A673 (cell line): ENCODE measurements at regions of chr4 and their contacts with region 1.

Region 1: DNA sequence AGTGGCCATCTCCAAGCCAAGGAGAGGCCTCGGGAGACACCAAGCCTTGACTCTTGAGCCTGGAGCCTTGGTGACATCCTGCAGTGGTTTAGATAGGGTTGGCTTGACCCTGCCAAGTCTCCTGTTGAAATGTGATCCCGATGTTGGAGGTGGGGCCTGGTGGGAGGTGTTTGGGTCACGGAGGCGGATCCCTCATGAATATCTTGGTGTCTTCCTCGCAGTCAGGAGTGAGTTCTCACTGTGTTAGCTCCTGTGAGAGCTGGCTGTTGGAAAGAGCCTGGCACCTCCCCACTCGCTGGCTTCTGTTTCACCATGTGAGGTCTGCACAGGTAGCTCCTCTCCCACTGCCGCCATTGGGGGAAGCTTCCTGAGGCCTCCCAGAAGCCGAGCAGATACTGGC is 38.8 kb downstream of the ADRA2C start:
- DNase-seq: no peak
- H3K4me3 ChIP-seq: no peak overlapping the region
- H3K27ac ChIP-seq: peak overlapping the region; percentile 76
- H3K4me1 ChIP-seq: peaks cover 22% of the 10 kb centered on the region
- H3K27me3 ChIP-seq: peaks cover 7% of the 10 kb centered on the region
- CTCF ChIP-seq: no peak

Region 2: DNA sequence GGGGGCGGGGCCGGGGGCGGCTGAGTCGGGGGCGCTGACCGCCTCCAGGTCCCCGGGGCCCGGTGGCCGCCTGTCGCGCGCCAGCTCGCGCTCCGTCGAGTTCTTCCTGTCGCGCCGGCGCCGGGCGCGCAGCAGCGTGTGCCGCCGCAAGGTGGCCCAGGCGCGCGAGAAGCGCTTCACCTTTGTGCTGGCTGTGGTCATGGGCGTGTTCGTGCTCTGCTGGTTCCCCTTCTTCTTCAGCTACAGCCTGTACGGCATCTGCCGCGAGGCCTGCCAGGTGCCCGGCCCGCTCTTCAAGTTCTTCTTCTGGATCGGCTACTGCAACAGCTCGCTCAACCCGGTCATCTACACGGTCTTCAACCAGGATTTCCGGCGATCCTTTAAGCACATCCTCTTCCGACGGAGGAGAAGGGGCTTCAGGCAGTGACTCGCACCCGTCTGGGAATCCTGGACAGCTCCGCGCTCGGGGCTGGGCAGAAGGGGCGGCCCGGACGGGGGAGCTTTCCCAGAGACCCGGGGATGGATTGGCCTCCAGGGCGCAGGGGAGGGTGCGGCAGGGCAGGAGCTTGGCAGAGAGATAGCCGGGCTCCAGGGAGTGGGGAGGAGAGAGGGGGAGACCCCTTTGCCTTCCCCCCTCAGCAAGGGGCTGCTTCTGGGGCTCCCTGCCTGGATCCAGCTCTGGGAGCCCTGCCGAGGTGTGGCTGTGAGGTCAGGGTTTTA is 37.3 kb before region 1 on chr4:
- CTCF ChIA-PET with region 1: interaction called, 5 read pairs
- POLR2A ChIA-PET with region 1: interaction called, 14 read pairs
- intact Hi-C with region 1: no loop called
- DNase-seq: no peak
- H3K4me3 ChIP-seq: no peak overlapping the region
- H3K27ac ChIP-seq: no peak overlapping the region
- H3K4me1 ChIP-seq: peaks cover 8% of the 10 kb centered on the region
- H3K27me3 ChIP-seq: peaks cover 19% of the 10 kb centered on the region
- CTCF ChIP-seq: no peak

Region 3: GRCh38 chr4:3783406-3784306 is 21.4 kb before region 1 on chr4:
- CTCF ChIA-PET with region 1: interaction called, 10 read pairs
- POLR2A ChIA-PET with region 1: interaction called, 4 read pairs
- intact Hi-C with region 1: no loop called
- DNase-seq: peak; percentile 57
- H3K4me3 ChIP-seq: no peak overlapping the region
- H3K27ac ChIP-seq: no peak overlapping the region
- H3K4me1 ChIP-seq: no peaks in the 10 kb centered on the region
- H3K27me3 ChIP-seq: no peaks in the 10 kb centered on the region
- CTCF ChIP-seq: peak; percentile 59